ENCODE measurements at regions of chr17 and their contacts with region 1.

Region 1: GRCh38 chr17:30336369-30337171 is 2.7 kb upstream of the TMIGD1 start:
- DNase-seq: no peak
- H3K4me3 ChIP-seq: no peak overlapping the region
- H3K27ac ChIP-seq: no peak overlapping the region
- H3K4me1 ChIP-seq: peaks cover 20% of the 10 kb centered on the region
- H3K27me3 ChIP-seq: no peaks in the 10 kb centered on the region
- CTCF ChIP-seq: peak; percentile 59

Region 2: GRCh38 chr17:30104575-30105339 is 231.8 kb before region 1 on chr17:
- intact Hi-C with region 1: loop called (anchors 10 kb)
- DNase-seq: peak; percentile 62
- H3K4me3 ChIP-seq: peak overlapping the region; percentile 57
- H3K27ac ChIP-seq: peak overlapping the region; percentile 30
- H3K4me1 ChIP-seq: peaks cover 6% of the 10 kb centered on the region
- H3K27me3 ChIP-seq: peaks cover under 1% of the 10 kb centered on the region
- CTCF ChIP-seq: peak; percentile 95